Adrenal gland (tissue), 19 donors: ENCODE measurements at regions of chr5 and their contacts with region 1.

Region 1: GRCh38 chr5:64207978-64208377 is 42.3 kb downstream of the RNF180 start:
- DNase-seq: no peak
- H3K4me3 ChIP-seq: no peak overlapping the region
- H3K27ac ChIP-seq: no peak overlapping the region
- H3K4me1 ChIP-seq: no peaks in the 10 kb centered on the region
- H3K27me3 ChIP-seq: no peaks in the 10 kb centered on the region
- CTCF ChIP-seq: peak; percentile 8 to 63 (median 44)
- POLR2A ChIP-seq: no peak

Region 2: DNA sequence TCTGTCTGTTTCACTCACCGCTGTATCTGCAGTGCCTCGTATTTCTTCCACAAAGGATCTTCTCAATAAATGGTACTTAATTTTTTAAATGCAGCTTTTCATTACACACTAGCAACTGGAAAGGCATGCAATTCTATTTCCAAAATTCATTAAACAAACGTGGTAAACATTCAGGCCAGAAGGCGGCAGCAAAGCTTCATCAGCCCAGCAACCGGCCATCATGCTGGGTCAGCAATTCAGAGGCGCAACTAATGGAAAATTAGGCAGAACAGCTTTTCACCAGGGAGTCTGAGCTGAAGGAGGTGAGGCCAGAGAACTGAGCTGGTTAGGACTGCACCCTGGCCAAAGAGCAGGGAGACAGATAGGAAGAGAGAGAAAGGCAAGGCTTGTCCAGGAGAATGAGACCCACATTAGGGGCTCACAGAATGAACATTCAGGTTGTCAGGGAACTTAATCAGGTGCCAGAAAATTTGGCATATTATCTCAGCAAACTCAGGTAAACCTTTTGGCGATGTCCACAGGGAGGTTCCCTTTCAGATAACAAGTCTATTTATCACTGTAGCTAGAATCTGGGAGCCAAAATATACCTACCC is 60.0 kb before region 1 on chr5:
- intact Hi-C with region 1: loop called (anchors 2 kb)
- DNase-seq: peak; percentile 48 to 89 (median 74)
- H3K4me3 ChIP-seq: no peak overlapping the region
- H3K27ac ChIP-seq: no peak overlapping the region
- H3K4me1 ChIP-seq: peaks cover 0 to 10% of the 10 kb centered on the region in 2 donors
- H3K27me3 ChIP-seq: no peaks in the 10 kb centered on the region
- CTCF ChIP-seq: peak; percentile 62 to 93 (median 86)
- POLR2A ChIP-seq: no peak